Heart right ventricle (tissue), 16 donors: ENCODE measurements at regions of chr1 and their contacts with region 1.

Region 1: DNA sequence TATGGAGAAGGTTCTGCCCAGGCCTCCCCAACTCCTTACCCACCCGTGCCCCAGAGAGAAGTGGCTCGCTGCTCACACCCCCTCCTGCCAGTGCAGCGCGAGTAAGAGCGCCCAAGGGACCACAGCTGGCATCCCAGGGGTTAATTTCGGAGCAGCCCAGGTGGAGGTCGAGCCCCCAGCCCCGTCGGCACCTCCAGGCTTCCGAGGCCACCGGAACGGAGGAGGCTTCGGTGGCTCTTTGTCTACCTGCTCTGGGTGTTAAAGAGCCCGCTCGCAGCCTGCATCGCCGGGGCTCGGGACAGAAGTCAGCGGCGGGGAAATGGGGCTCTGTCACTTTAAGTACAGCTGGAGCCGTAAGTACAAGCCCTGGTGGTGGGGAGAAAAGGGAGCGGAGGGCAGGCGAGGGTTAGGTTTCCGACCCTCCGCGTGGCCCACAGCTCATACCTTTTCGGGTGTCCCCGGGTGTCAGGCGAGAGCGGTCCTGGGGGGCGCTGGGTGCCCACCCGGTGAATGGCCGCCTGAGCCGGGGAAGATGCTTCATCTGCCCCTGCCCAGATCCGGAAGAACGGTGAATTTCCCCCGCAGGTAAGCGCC is 89.4 kb upstream of the IPO9 start:
- DNase-seq: peak; percentile 62 to 69
- ATAC-seq: peak; percentile 45 to 75 (median 70)
- H3K4me3 ChIP-seq: peak overlapping the region; percentile 63 to 93 (median 86)
- H3K27ac ChIP-seq: peak overlapping the region; percentile 77 to 97 (median 92)
- H3K4me1 ChIP-seq: peaks cover 34 to 100% (median 87%) of the 10 kb centered on the region in 9 donors
- H3K27me3 ChIP-seq: peaks cover 0 to 16% (median 0%) of the 10 kb centered on the region in 7 donors
- CTCF ChIP-seq: peak in 1 of 9 donors; percentile 11

Region 2: GRCh38 chr1:201709564-201710295 is 29.9 kb before region 1 on chr1:
- intact Hi-C with region 1: loop called in 1 of 10 experiments (anchors 1 kb)
- DNase-seq: peak; percentile 74 to 84
- ATAC-seq: peak; percentile 56 to 76 (median 63)
- H3K4me3 ChIP-seq: no peak overlapping the region
- H3K27ac ChIP-seq: peak overlapping the region; percentile 5 to 98 (median 90)
- H3K4me1 ChIP-seq: peaks cover 39 to 83% (median 64%) of the 10 kb centered on the region in 9 donors
- H3K27me3 ChIP-seq: no peaks in the 10 kb centered on the region
- CTCF ChIP-seq: peak; percentile 94 to 98 (median 96)

Region 3: DNA sequence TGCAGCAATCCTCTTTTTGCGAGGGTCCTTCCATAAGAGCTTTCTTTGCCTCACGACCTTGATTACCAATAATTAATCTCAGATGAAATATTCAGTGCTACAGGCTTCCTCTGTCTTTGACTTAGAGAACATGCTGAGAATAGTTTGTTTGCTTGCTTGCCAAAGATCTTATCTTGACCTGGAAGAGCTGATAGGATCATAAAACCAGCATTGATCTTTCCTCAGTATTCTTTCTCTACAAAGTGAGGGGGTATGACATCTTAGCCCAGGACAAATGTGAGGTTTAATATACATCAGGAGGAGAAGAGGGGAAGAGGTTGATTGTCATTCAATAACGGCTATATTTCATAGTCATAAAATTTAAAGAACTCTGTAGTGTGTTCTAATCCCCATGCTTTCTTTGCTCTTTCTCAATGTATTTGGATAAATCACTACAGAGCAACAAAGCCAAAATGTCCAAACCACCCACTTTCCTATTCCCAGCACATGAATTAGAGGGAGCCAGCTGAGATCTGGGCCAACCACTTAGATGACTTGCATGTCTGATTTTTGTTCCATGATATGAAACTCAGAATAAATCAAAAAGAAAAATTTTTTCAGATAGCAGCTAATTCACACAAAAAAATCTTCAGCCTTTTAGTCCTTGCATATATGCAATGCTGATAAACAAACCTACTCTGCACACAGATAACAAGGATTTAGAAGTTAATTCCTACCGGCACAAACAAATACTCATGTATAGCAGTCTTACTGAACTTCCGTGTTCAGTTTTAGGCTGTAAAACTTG is 38.9 kb after region 1 on chr1:
- intact Hi-C with region 1: loop called in 2 of 10 experiments (anchors 5 kb)
- DNase-seq: no peak
- ATAC-seq: peak in 6 of 8 donors; percentile 35 to 62 (median 52)
- H3K4me3 ChIP-seq: no peak overlapping the region
- H3K27ac ChIP-seq: peak overlapping the region; percentile 2 to 84 (median 52)
- H3K4me1 ChIP-seq: peaks cover 0 to 93% (median 65%) of the 10 kb centered on the region in 9 donors
- H3K27me3 ChIP-seq: no peaks in the 10 kb centered on the region
- CTCF ChIP-seq: no peak

Region 4: DNA sequence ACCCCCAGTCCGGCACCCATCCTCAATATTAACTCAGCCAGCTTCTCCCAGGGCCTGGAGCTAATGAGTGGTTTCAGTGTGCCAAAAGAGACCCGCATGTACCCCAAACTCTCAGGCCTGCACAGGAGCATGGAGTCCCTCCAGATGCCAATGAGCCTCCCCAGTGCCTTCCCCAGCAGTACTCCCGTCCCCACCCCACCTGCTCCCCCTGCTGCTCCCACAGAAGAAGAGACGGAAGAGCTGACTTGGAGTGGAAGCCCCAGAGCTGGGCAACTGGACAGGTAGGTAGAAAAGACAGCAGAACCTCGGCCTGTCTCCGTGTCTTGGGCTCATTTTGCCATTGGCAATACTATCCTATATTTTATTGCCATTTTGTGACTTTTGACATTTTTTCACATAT is 44.0 kb after region 1 on chr1:
- intact Hi-C with region 1: loop called in 2 of 10 experiments (anchors 5 kb)
- DNase-seq: no peak
- ATAC-seq: no peak
- H3K4me3 ChIP-seq: no peak overlapping the region
- H3K27ac ChIP-seq: peak overlapping the region in 2 of 10 donors; percentile 9 to 59
- H3K4me1 ChIP-seq: peaks cover 10 to 86% (median 50%) of the 10 kb centered on the region in 9 donors
- H3K27me3 ChIP-seq: no peaks in the 10 kb centered on the region
- CTCF ChIP-seq: peak in 2 of 9 donors; percentile 10 to 12

Region 5: GRCh38 chr1:201792534-201793305 is 53.1 kb after region 1 on chr1:
- intact Hi-C with region 1: loop called in 2 of 10 experiments (anchors 2 to 5 kb)
- DNase-seq: peak; percentile 56 to 86
- ATAC-seq: peak; percentile 79 to 87 (median 80)
- H3K4me3 ChIP-seq: no peak overlapping the region
- H3K27ac ChIP-seq: peak overlapping the region; percentile 53 to 94 (median 82)
- H3K4me1 ChIP-seq: peaks cover 41 to 74% (median 56%) of the 10 kb centered on the region in 9 donors
- H3K27me3 ChIP-seq: no peaks in the 10 kb centered on the region
- CTCF ChIP-seq: peak; percentile 93 to 97 (median 96)